Esophagus muscularis mucosa (tissue), 4 donors: ENCODE measurements at regions of chr15 and their contacts with region 1.

Region 1: DNA sequence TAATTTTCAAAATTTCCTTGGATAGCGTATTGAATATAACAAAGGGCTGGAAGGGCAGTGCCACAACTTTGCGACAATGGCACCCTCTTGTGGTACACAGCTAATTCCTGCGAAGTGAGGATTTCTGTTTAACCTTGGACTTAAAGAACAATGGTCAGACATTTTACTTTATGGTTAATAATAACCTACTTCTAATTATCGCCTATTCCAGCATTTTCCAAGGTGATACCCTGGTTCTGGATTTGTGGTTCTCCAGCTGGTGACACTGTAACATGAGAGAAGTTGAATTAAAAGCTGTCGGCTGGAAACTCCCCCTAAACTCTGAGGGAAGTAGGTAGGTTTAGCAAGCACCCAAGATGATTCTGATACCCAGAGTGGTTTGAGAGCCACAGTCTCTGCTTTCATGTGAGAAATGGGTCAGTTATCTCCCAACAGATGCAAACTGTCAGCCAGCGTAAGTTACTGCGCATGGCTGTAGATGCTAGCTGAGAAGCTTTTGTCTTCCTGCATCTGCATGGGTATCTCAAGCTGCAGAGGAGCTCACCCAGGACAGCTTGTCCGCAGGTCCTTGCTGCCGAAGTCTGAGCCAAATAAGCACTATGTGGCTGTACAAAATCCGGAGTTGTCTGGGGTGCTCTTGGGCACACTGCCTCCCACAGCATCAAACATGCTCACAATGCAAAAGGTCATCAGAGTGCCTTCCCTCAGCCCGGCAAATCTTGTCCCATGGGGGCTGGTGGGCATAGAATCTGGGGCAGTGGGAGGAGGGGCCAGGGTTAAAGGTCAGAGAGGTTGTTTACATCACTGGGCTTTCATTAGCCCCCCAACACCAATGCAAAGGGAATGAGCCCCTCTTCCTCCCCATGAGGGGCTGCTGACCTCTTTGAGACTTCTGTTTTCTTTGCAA is 6.6 kb upstream of the CHSY1 start:
- DNase-seq: no peak
- H3K4me3 ChIP-seq: no peak overlapping the region
- H3K27ac ChIP-seq: no peak overlapping the region
- H3K4me1 ChIP-seq: peaks cover 0 to 10% (median 4%) of the 10 kb centered on the region in 4 donors
- H3K27me3 ChIP-seq: no peaks in the 10 kb centered on the region
- CTCF ChIP-seq: peak; percentile 82 to 89 (median 84)
- EP300 ChIP-seq: no peak
- POLR2A ChIP-seq: no peak

Region 2: GRCh38 chr15:101014921-101015841 is 243.3 kb before region 1 on chr15:
- intact Hi-C with region 1: loop called (anchors 2 kb)
- DNase-seq: peak; percentile 90
- H3K4me3 ChIP-seq: no peak overlapping the region
- H3K27ac ChIP-seq: no peak overlapping the region
- H3K4me1 ChIP-seq: peaks cover 0 to 8% (median 4%) of the 10 kb centered on the region in 4 donors
- H3K27me3 ChIP-seq: peaks cover 0 to 12% (median 0%) of the 10 kb centered on the region in 4 donors
- CTCF ChIP-seq: peak; percentile 79 to 90 (median 83)
- EP300 ChIP-seq: no peak
- POLR2A ChIP-seq: no peak

Region 3: GRCh38 chr15:101088788-101089583 is 169.5 kb before region 1 on chr15:
- intact Hi-C with region 1: loop called (anchors 2 kb)
- DNase-seq: no peak
- H3K4me3 ChIP-seq: peak overlapping the region; percentile 20 to 44 (median 38)
- H3K27ac ChIP-seq: no peak overlapping the region
- H3K4me1 ChIP-seq: peaks cover 22 to 41% (median 32%) of the 10 kb centered on the region in 4 donors
- H3K27me3 ChIP-seq: no peaks in the 10 kb centered on the region
- CTCF ChIP-seq: peak in 2 of 3 experiments; percentile 99 to 100
- EP300 ChIP-seq: no peak
- POLR2A ChIP-seq: no peak

Region 4: GRCh38 chr15:101397521-101398003 is 139.1 kb after region 1 on chr15:
- intact Hi-C with region 1: no loop called
- DNase-seq: no peak
- H3K4me3 ChIP-seq: no peak overlapping the region
- H3K27ac ChIP-seq: no peak overlapping the region
- H3K4me1 ChIP-seq: no peaks in the 10 kb centered on the region
- H3K27me3 ChIP-seq: peaks cover 0 to 30% (median 0%) of the 10 kb centered on the region in 4 donors
- CTCF ChIP-seq: no peak
- EP300 ChIP-seq: no peak
- POLR2A ChIP-seq: no peak